ENCODE measurements at regions of chr20 and their contacts with region 1.

Region 1: GRCh38 chr20:35303735-35304491 is 11.7 kb upstream of the FAM83C start:
- DNase-seq: peak; percentile 92
- H3K4me3 ChIP-seq: no peak overlapping the region
- H3K27ac ChIP-seq: peak overlapping the region in 3 of 4 donors; percentile 43 to 84 (median 51)
- H3K4me1 ChIP-seq: peaks cover 0 to 66% (median 62%) of the 10 kb centered on the region in 4 donors
- H3K27me3 ChIP-seq: no peaks in the 10 kb centered on the region
- CTCF ChIP-seq: peak; percentile 83 to 92 (median 90)
- EP300 ChIP-seq: no peak
- POLR2A ChIP-seq: no peak

Region 2: DNA sequence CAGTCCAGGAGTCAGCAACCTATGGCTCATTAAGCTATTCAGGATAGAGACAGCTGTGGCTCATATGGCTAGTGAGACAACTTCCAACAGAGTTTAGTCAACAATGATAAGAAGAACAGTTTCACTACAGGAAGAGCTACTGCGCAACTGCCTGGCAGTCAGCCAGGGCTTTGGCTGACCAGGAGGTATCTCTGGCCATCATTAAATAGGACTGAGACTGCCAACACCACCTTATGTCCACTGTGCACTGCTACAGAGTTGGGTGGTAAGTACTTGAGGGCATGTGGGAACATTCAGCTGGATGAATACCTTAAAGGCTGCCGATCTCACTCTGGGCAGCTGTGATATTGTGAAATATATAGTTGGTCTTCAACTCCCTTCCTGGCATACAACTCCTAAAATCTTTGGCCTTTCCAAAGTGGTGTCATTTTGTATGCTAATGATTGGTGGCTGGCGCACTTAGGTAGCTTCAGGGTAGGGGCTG is 40.5 kb after region 1 on chr20:
- intact Hi-C with region 1: loop called (anchors 5 kb)
- DNase-seq: no peak
- H3K4me3 ChIP-seq: no peak overlapping the region
- H3K27ac ChIP-seq: no peak overlapping the region
- H3K4me1 ChIP-seq: peaks cover 0 to 39% (median 32%) of the 10 kb centered on the region in 4 donors
- H3K27me3 ChIP-seq: no peaks in the 10 kb centered on the region
- CTCF ChIP-seq: no peak
- EP300 ChIP-seq: no peak
- POLR2A ChIP-seq: no peak

Region 3: GRCh38 chr20:35410613-35411012 is 106.7 kb after region 1 on chr20:
- intact Hi-C with region 1: no loop called
- DNase-seq: no peak
- H3K4me3 ChIP-seq: peak overlapping the region in 1 of 4 donors; percentile 70
- H3K27ac ChIP-seq: peak overlapping the region in 1 of 4 donors; percentile 82
- H3K4me1 ChIP-seq: peaks cover 0 to 13% (median 10%) of the 10 kb centered on the region in 4 donors
- H3K27me3 ChIP-seq: no peaks in the 10 kb centered on the region
- CTCF ChIP-seq: no peak
- EP300 ChIP-seq: no peak
- POLR2A ChIP-seq: no peak

Region 4: GRCh38 chr20:35443003-35443402 is 139.1 kb after region 1 on chr20:
- intact Hi-C with region 1: loop called (anchors 1 kb)
- DNase-seq: no peak
- H3K4me3 ChIP-seq: no peak overlapping the region
- H3K27ac ChIP-seq: no peak overlapping the region
- H3K4me1 ChIP-seq: peaks cover 0 to 20% (median 15%) of the 10 kb centered on the region in 4 donors
- H3K27me3 ChIP-seq: no peaks in the 10 kb centered on the region
- CTCF ChIP-seq: no peak
- EP300 ChIP-seq: no peak
- POLR2A ChIP-seq: no peak